Endothelial cell of umbilical vein (primary cell): ENCODE measurements at regions of chr3 and their contacts with region 1.

Region 1: DNA sequence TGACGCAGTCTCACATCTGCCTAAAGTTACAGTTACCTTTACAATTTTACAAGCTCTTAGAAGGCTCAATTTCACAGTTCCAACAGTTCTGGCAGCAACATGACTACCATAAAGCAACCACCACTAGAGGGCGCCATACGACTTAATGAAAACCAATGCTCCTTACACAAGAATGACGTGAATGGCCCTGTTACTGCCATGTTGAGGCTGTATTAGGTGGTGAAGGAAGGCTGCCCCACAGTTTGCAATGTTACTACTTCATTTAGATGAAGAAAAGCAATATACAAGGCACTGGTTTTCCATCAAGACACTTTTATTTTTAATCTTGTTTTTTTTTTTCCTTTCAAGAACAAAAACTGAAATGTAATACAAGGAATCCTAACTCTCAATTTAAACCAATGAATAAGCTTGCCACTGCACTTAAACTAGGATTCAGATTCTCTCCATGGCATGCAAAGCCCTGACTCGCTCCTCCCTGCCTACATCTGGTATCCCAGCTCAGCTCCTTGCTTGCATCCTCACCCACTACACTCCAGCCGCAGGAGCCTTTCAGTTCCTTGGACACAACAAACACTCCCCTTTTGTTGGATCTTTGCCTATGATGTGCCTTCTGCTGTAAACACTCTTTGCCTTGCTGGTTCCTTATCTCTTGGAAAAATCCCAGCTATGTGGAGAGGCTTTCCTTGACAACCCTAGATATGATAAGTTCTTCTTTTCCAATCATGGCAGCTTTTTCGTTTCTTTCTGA is 270.7 kb downstream of the GBE1 start:
- DNase-seq: peak; percentile 80
- H3K4me3 ChIP-seq: no peak overlapping the region
- H3K27ac ChIP-seq: no peak overlapping the region
- H3K4me1 ChIP-seq: peaks cover 5% of the 10 kb centered on the region
- H3K27me3 ChIP-seq: no peaks in the 10 kb centered on the region
- CTCF ChIP-seq: peak; percentile 75 to 80
- POLR2A ChIP-seq: no peak

Region 2: DNA sequence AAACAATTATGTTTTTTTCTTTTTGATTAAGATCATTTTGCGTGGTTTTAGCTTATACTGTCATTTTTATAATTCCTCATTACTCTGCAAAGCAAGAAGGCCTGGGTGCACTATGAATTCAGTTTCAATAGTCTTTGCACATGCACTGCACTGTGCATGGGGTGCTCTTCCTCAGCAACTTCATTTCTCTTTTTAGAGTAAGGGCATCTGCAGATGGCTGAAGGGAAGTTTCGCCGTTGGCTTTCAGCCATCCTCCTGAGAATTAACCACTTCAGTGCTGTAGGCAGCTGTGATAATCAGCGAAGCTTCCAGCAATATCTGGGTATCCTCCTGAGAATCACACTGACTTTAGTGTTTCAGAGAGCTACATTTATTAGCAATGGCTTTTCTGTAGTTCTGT is 14.0 kb before region 1 on chr3:
- CTCF ChIA-PET with region 1: interaction called, 34 read pairs
- POLR2A ChIA-PET with region 1: interaction called, 3 read pairs
- dilution Hi-C with region 1: no loop called
- intact Hi-C with region 1: no loop called
- DNase-seq: no peak
- H3K4me3 ChIP-seq: no peak overlapping the region
- H3K27ac ChIP-seq: no peak overlapping the region
- H3K4me1 ChIP-seq: peaks cover 26% of the 10 kb centered on the region
- H3K27me3 ChIP-seq: no peaks in the 10 kb centered on the region
- CTCF ChIP-seq: no peak
- POLR2A ChIP-seq: no peak

Region 3: DNA sequence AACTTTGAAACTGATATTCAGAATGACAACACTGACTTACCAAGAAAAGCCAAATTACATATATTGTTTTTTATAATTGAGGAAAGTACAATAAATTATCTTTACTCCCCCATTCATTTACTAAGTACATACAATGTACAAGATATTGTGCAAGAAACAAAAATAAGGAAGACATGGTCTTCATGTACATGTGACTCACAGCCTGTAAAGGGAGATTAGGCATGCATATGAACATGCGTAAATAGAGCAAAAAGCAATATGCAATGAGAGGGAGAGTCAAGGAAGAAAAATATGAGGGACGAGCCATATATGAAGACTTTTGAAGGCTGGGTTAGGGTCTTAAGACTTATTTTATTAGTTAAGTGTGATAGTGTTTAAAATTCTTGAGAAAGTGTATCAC is 12.3 kb after region 1 on chr3:
- CTCF ChIA-PET with region 1: interaction called, 21 read pairs
- POLR2A ChIA-PET with region 1: no interaction called
- dilution Hi-C with region 1: no loop called
- intact Hi-C with region 1: no loop called
- DNase-seq: no peak
- H3K4me3 ChIP-seq: no peak overlapping the region
- H3K27ac ChIP-seq: no peak overlapping the region
- H3K4me1 ChIP-seq: no peaks in the 10 kb centered on the region
- H3K27me3 ChIP-seq: no peaks in the 10 kb centered on the region
- CTCF ChIP-seq: no peak
- POLR2A ChIP-seq: no peak

Region 4: GRCh38 chr3:81581966-81582599 is 91.4 kb after region 1 on chr3:
- CTCF ChIA-PET with region 1: interaction called, 5 read pairs
- POLR2A ChIA-PET with region 1: no interaction called
- dilution Hi-C with region 1: no loop called
- intact Hi-C with region 1: loop called (anchors 5 kb)
- DNase-seq: peak; percentile 50
- H3K4me3 ChIP-seq: no peak overlapping the region
- H3K27ac ChIP-seq: no peak overlapping the region
- H3K4me1 ChIP-seq: no peaks in the 10 kb centered on the region
- H3K27me3 ChIP-seq: no peaks in the 10 kb centered on the region
- CTCF ChIP-seq: peak; percentile 62 to 66
- POLR2A ChIP-seq: no peak

Region 5: GRCh38 chr3:81643721-81644120 is 153.0 kb after region 1 on chr3:
- CTCF ChIA-PET with region 1: interaction called, 14 read pairs
- POLR2A ChIA-PET with region 1: no interaction called
- dilution Hi-C with region 1: no loop called
- intact Hi-C with region 1: loop called (anchors 10 kb)
- DNase-seq: peak; percentile 41
- H3K4me3 ChIP-seq: no peak overlapping the region
- H3K27ac ChIP-seq: no peak overlapping the region
- H3K4me1 ChIP-seq: no peaks in the 10 kb centered on the region
- H3K27me3 ChIP-seq: no peaks in the 10 kb centered on the region
- CTCF ChIP-seq: peak; percentile 28 to 42
- POLR2A ChIP-seq: no peak

Region 6: GRCh38 chr3:81799403-81799802 is 308.7 kb after region 1 on chr3:
- CTCF ChIA-PET with region 1: no interaction called
- POLR2A ChIA-PET with region 1: no interaction called
- dilution Hi-C with region 1: no loop called
- intact Hi-C with region 1: loop called (anchors 5 kb)
- DNase-seq: no peak
- H3K4me3 ChIP-seq: no peak overlapping the region
- H3K27ac ChIP-seq: no peak overlapping the region
- H3K4me1 ChIP-seq: no peaks in the 10 kb centered on the region
- H3K27me3 ChIP-seq: no peaks in the 10 kb centered on the region
- CTCF ChIP-seq: no peak
- POLR2A ChIP-seq: no peak

Region 7: DNA sequence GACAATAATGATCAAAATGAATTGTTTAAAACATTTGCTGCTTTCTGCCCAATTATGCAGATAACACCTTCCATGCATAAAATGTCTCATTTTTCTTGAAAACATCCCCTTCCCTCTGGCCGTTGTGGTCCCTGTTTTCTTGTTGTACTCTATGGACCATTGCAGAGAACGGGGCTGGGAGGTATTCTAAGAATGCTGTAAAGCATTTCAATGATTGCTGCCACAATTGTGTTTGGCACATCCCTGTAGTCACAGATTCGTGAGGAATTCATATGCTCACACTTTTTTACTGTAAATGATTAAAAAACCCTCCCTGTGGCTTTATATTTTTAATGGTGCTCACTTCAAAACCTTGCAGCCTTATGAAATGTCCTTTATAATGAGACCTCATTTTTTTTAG is 477.9 kb after region 1 on chr3:
- CTCF ChIA-PET with region 1: no interaction called
- POLR2A ChIA-PET with region 1: no interaction called
- dilution Hi-C with region 1: no loop called
- intact Hi-C with region 1: no loop called
- DNase-seq: no peak
- H3K4me3 ChIP-seq: no peak overlapping the region
- H3K27ac ChIP-seq: no peak overlapping the region
- H3K4me1 ChIP-seq: no peaks in the 10 kb centered on the region
- H3K27me3 ChIP-seq: peaks cover 0 to 2% of the 10 kb centered on the region in 2 experiments
- CTCF ChIP-seq: no peak
- POLR2A ChIP-seq: no peak